Endothelial cell of umbilical vein (primary cell): ENCODE measurements at regions of chr1 and their contacts with region 1.

Region 1: DNA sequence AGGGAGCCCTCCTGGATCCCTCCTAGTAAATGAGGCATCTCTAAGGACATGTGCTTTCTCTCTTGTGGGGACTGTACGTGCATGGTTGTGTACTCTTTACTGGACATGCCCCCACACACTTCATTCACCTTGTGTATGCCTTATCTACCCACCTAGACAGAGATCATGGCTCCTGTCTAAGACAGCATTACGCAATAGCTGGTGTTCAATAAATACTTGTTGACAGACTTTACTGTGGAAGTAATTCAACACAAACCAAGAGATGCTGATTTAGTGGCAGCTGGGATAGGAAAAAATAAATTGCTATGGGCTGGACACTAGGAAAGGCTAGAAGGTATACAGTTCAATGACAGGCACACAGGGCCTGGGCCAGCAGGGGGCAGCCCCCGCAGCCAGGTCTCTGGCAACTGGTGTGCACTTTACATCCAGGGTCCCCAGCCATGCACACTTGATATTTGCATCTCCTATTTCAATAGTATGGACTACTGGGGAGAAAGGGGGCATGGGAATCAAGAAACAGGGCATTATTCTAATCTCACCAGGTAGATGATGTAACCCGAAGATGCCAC is 24.2 kb downstream of the TRABD2B start:
- DNase-seq: no peak
- H3K4me3 ChIP-seq: no peak overlapping the region
- H3K27ac ChIP-seq: no peak overlapping the region
- H3K4me1 ChIP-seq: no peaks in the 10 kb centered on the region
- H3K27me3 ChIP-seq: no peaks in the 10 kb centered on the region
- CTCF ChIP-seq: peak in 1 of 2 donors; percentile 36
- POLR2A ChIP-seq: no peak

Region 2: DNA sequence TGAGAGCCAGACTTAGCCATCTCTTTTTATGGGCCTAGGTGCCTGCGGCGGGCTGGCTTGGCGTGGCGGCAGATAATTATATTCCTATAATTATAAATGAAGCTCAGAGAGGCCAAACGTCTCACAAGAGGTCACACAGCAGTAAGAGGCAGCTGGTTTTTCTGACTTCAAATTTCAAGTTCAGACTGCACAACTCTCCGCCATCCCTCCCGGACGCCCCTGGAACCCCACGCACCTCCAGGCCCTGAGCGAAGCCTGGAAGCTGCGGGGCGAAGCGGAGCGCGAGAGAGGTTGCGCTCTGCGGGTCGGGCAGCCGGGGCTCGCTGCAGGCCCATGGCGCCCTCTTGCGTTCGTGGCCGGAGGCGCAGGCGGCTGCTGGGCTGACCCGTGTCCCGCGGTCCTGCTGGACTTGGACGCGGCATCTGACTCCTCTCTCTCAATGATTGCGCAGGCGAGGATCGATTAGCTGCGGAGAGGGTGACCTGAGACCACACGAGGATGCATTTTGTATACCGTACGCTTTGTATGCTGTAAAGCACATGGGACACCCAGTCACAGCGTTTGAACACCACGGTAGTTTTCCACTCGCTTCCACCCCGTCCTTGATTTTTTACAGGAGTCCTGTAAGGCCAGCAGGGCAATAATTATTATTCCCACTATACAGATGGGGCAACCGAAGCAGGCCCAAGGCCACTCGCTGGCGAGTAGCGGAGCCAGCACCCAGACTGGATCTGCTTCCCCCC is 262.4 kb before region 1 on chr1:
- CTCF ChIA-PET with region 1: no interaction called
- POLR2A ChIA-PET with region 1: no interaction called
- dilution Hi-C with region 1: no loop called
- intact Hi-C with region 1: no loop called
- DNase-seq: peak; percentile 56
- H3K4me3 ChIP-seq: no peak overlapping the region
- H3K27ac ChIP-seq: no peak overlapping the region
- H3K4me1 ChIP-seq: peaks cover 7% of the 10 kb centered on the region
- H3K27me3 ChIP-seq: peaks cover 59 to 66% of the 10 kb centered on the region in 2 experiments
- CTCF ChIP-seq: peak; percentile 98 to 99
- POLR2A ChIP-seq: no peak

Region 3: GRCh38 chr1:48061162-48062136 is 88.5 kb after region 1 on chr1:
- CTCF ChIA-PET with region 1: no interaction called
- POLR2A ChIA-PET with region 1: no interaction called
- dilution Hi-C with region 1: no loop called
- intact Hi-C with region 1: loop called (anchors 1 kb)
- DNase-seq: peak; percentile 61
- H3K4me3 ChIP-seq: no peak overlapping the region
- H3K27ac ChIP-seq: no peak overlapping the region
- H3K4me1 ChIP-seq: no peaks in the 10 kb centered on the region
- H3K27me3 ChIP-seq: no peaks in the 10 kb centered on the region
- CTCF ChIP-seq: peak; percentile 48 to 56
- POLR2A ChIP-seq: no peak